ENCODE measurements at regions of chr3 and their contacts with region 1.

Region 1: GRCh38 chr3:24680214-24680967 is 185.7 kb upstream of the THRB start:
- DNase-seq: no peak
- H3K4me3 Mint-ChIP-seq: no peak overlapping the region
- H3K27ac Mint-ChIP-seq: no peak overlapping the region
- H3K4me1 Mint-ChIP-seq: peaks cover 22% of the 10 kb centered on the region
- H3K27me3 Mint-ChIP-seq: peaks cover 52% of the 10 kb centered on the region

Region 2: GRCh38 chr3:23999012-23999641 is 681.3 kb before region 1 on chr3:
- intact Hi-C with region 1: loop called (anchors 1 kb)
- DNase-seq: peak; percentile 37
- H3K4me3 Mint-ChIP-seq: no peak overlapping the region
- H3K27ac Mint-ChIP-seq: no peak overlapping the region
- H3K4me1 Mint-ChIP-seq: peaks cover 2% of the 10 kb centered on the region
- H3K27me3 Mint-ChIP-seq: peaks cover 10% of the 10 kb centered on the region

Region 3: GRCh38 chr3:24185738-24186384 is 494.5 kb before region 1 on chr3:
- intact Hi-C with region 1: loop called (anchors 2 kb)
- DNase-seq: peak; percentile 2
- H3K4me3 Mint-ChIP-seq: no peak overlapping the region
- H3K27ac Mint-ChIP-seq: no peak overlapping the region
- H3K4me1 Mint-ChIP-seq: no peaks in the 10 kb centered on the region
- H3K27me3 Mint-ChIP-seq: peaks cover 2% of the 10 kb centered on the region

Region 4: GRCh38 chr3:24663418-24663817 is 17.0 kb before region 1 on chr3:
- intact Hi-C with region 1: no loop called
- DNase-seq: no peak
- H3K4me3 Mint-ChIP-seq: no peak overlapping the region
- H3K27ac Mint-ChIP-seq: no peak overlapping the region
- H3K4me1 Mint-ChIP-seq: no peaks in the 10 kb centered on the region
- H3K27me3 Mint-ChIP-seq: peaks cover 4% of the 10 kb centered on the region

Region 5: GRCh38 chr3:25033407-25034029 is 353.1 kb after region 1 on chr3:
- intact Hi-C with region 1: loop called (anchors 1 kb)
- DNase-seq: no peak
- H3K4me3 Mint-ChIP-seq: no peak overlapping the region
- H3K27ac Mint-ChIP-seq: no peak overlapping the region
- H3K4me1 Mint-ChIP-seq: no peaks in the 10 kb centered on the region
- H3K27me3 Mint-ChIP-seq: no peaks in the 10 kb centered on the region

Region 6: GRCh38 chr3:25664810-25665314 is 984.5 kb after region 1 on chr3 and contains the start of gene TOP2B:
- intact Hi-C with region 1: loop called (anchors 10 kb)
- DNase-seq: peak; percentile 95
- H3K4me3 Mint-ChIP-seq: peak within 1 kb of the TSS; percentile 95
- H3K27ac Mint-ChIP-seq: peak within 1 kb of the TSS; percentile 97
- H3K4me1 Mint-ChIP-seq: peaks cover 36% of the 10 kb centered on the region
- H3K27me3 Mint-ChIP-seq: peaks cover 2% of the 10 kb centered on the region
- total RNA-seq, gene TOP2B: 133 and 135 TPM in 2 replicates

Measured in activated T-helper 1 cell treated with anti-CD3 and anti-CD28 coated beads, Interleukin-12 subunit alpha, Interleukin-12 subunit beta, Interleukin-2, Interleukin-4 antibody, amounts not matched to agents 30 ng/mL and 10 ng/mL and 1 ng/mL, durations not matched to agents 14 hours and 24 hours and 36 hours (primary cell).